Posterior cingulate gyrus (tissue), 11 donors: ENCODE measurements at regions of chr6 and their contacts with region 1.

Region 1: GRCh38 chr6:123965894-123966293 is 162.2 kb downstream of the NKAIN2 start:
- DNase-seq: peak in 2 of 10 donors; percentile 40 to 70

Region 2: GRCh38 chr6:123802697-123803496 is 163.0 kb before region 1 on chr6:
- intact Hi-C with region 1: loop called (anchors 2 kb)
- DNase-seq: peak; percentile 83 to 98 (median 90)

Region 3: GRCh38 chr6:124090491-124090890 is 124.6 kb after region 1 on chr6:
- intact Hi-C with region 1: no loop called
- DNase-seq: no peak